Activated CD4-positive, alpha-beta T cell treated with anti-CD3 and anti-CD28 coated beads, Interleukin-2, amount 10 ng/mL, durations not matched to agents 7 days and 5 days (primary cell): ENCODE measurements at regions of chr1 and their contacts with region 1.

Region 1: GRCh38 chr1:204162231-204163074 is 3.7 kb downstream of the REN start:
- DNase-seq: peak; percentile 75
- H3K4me3 Mint-ChIP-seq: no peak overlapping the region
- H3K27ac Mint-ChIP-seq: peak overlapping the region; percentile 43
- H3K4me1 Mint-ChIP-seq: no peaks in the 10 kb centered on the region
- H3K27me3 Mint-ChIP-seq: no peaks in the 10 kb centered on the region

Region 2: DNA sequence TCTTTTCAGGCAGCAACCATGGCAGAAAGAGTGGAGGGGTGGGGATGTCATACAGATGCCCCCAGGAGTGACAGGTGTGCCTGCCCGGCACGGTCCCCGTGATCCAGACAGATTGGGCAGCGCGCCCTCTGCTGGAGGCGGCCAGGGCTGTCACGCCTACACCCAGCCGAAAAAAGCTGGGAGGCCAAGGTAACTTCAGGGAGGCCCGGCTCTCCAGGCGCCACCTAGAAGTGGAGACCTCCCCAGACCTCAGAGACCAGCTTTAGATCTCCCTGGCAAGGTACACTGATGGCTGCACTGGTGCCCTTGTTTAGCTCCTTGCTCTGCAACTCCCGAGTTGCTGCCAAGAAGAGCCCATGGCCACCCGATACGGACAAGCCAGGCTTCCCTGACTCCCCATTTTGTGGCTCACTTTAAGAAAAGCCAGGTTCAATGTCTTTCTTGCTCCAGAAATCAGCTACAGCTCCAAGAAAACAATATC is 44.7 kb after region 1 on chr1:
- CTCF ChIA-PET with region 1: interaction called, 10 read pairs
- POLR2A ChIA-PET with region 1: no interaction called
- DNase-seq: peak; percentile 75
- H3K4me3 Mint-ChIP-seq: no peak overlapping the region
- H3K27ac Mint-ChIP-seq: no peak overlapping the region
- H3K4me1 Mint-ChIP-seq: no peaks in the 10 kb centered on the region
- H3K27me3 Mint-ChIP-seq: peaks cover 30% of the 10 kb centered on the region